Caco-2 (cell line): ENCODE measurements at regions of chrX and their contacts with region 1.

Region 1: GRCh38 chrX:85611926-85612325 is 232.5 kb upstream of the POF1B start:
- DNase-seq: no peak
- H3K4me3 ChIP-seq: no peak overlapping the region
- H3K4me3 Mint-ChIP-seq: no peak overlapping the region
- H3K27ac Mint-ChIP-seq: no peak overlapping the region
- H3K4me1 ChIP-seq: no peaks in the 10 kb centered on the region
- H3K4me1 Mint-ChIP-seq: no peaks in the 10 kb centered on the region
- H3K27me3 ChIP-seq: no peaks in the 10 kb centered on the region
- H3K27me3 Mint-ChIP-seq: peaks cover 2% of the 10 kb centered on the region
- CTCF ChIP-seq: no peak

Region 2: GRCh38 chrX:85930099-85930498 is 318.2 kb after region 1 on chrX:
- CTCF ChIA-PET with region 1: no interaction called
- POLR2A ChIA-PET with region 1: no interaction called
- intact Hi-C with region 1: loop called (anchors 5 kb)
- DNase-seq: peak in 1 of 2 experiments; percentile 14
- H3K4me3 ChIP-seq: no peak overlapping the region
- H3K4me3 Mint-ChIP-seq: no peak overlapping the region
- H3K27ac Mint-ChIP-seq: no peak overlapping the region
- H3K4me1 ChIP-seq: no peaks in the 10 kb centered on the region
- H3K4me1 Mint-ChIP-seq: no peaks in the 10 kb centered on the region
- H3K27me3 ChIP-seq: no peaks in the 10 kb centered on the region
- H3K27me3 Mint-ChIP-seq: no peaks in the 10 kb centered on the region
- CTCF ChIP-seq: peak in 1 of 2 experiments; percentile 15

Region 3: GRCh38 chrX:86066997-86067396 is 455.1 kb after region 1 on chrX:
- CTCF ChIA-PET with region 1: no interaction called
- POLR2A ChIA-PET with region 1: no interaction called
- intact Hi-C with region 1: loop called (anchors 5 kb)
- DNase-seq: peak in 1 of 2 experiments; percentile 12
- H3K4me3 ChIP-seq: no peak overlapping the region
- H3K4me3 Mint-ChIP-seq: no peak overlapping the region
- H3K27ac Mint-ChIP-seq: no peak overlapping the region
- H3K4me1 ChIP-seq: no peaks in the 10 kb centered on the region
- H3K4me1 Mint-ChIP-seq: no peaks in the 10 kb centered on the region
- H3K27me3 ChIP-seq: no peaks in the 10 kb centered on the region
- H3K27me3 Mint-ChIP-seq: no peaks in the 10 kb centered on the region
- CTCF ChIP-seq: peak; percentile 21 to 55